Heart left ventricle (tissue), 16 donors: ENCODE measurements at regions of chr1 and their contacts with region 1.

Region 1: DNA sequence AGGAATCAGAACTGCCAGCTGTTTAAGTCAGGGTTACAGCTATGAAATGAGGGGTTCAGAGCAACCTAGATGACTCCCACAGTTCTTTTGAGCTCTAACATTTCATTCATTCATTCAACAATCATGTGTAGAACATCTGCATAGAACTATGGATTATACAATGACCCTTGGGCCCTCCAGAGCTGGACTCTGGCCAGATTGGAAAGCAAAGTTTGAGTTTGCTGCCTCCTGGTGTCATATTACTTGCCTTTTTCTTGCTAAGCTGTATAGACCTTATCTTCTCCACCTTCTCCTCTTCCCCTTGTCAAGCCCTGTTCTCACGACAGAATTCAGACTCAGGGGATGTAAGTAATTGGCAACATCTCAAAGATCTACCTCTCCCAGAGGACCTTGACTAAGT is 4.0 kb downstream of the CASQ2 start:
- DNase-seq: peak in 1 of 5 donors; percentile 32
- ATAC-seq: no peak
- H3K4me3 ChIP-seq: peak overlapping the region in 7 of 12 donors; percentile 60 to 86 (median 64)
- H3K27ac ChIP-seq: peak overlapping the region in 6 of 12 donors; percentile 41 to 100 (median 92)
- H3K4me1 ChIP-seq: peaks cover 0 to 56% (median 10%) of the 10 kb centered on the region in 12 donors
- H3K27me3 ChIP-seq: no peaks in the 10 kb centered on the region
- CTCF ChIP-seq: peak in 10 of 12 donors; percentile 32 to 65 (median 45)
- POLR2A ChIP-seq: no peak

Region 2: GRCh38 chr1:115717541-115717940 is 47.0 kb before region 1 on chr1:
- intact Hi-C with region 1: loop called in 6 of 10 experiments (anchors 2 to 5 kb)
- DNase-seq: peak in 2 of 5 donors; percentile 27 to 62
- ATAC-seq: peak in 2 of 4 donors; percentile 4 to 21
- H3K4me3 ChIP-seq: no peak overlapping the region
- H3K27ac ChIP-seq: no peak overlapping the region
- H3K4me1 ChIP-seq: peaks cover 0 to 4% (median 0%) of the 10 kb centered on the region in 12 donors
- H3K27me3 ChIP-seq: no peaks in the 10 kb centered on the region
- CTCF ChIP-seq: peak; percentile 31 to 65 (median 52)
- POLR2A ChIP-seq: no peak

Region 3: DNA sequence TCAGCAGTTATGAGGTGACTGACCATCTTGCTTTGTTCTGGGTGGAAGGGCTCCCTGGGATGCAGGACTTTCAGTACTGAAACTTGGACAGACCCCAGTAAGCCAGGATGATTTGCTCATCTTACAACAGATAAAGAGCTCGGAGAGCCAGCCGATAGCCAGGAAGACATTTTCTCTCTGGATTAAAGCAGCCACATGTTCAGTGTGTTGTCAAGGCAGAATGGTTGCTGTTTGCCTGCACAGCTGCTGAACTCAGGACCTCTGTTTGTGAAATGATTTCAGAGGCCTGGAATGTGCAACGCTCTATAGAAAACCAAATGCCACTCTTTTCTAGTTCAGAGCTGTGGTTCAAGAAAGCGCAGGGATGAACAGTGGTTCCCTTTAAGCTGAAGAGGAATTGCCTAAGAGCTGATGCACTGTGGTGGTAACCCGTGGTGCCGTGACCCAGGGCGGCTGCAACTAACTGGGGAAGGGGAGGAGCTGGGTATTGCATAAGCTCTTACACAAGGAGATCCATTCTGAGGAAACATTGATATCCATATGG is 36.8 kb before region 1 on chr1:
- intact Hi-C with region 1: loop called in 3 of 10 experiments (anchors 2 to 5 kb)
- DNase-seq: peak; percentile 52 to 77 (median 65)
- ATAC-seq: peak; percentile 79 to 90 (median 82)
- H3K4me3 ChIP-seq: no peak overlapping the region
- H3K27ac ChIP-seq: peak overlapping the region; percentile 52 to 88 (median 74)
- H3K4me1 ChIP-seq: peaks cover 0 to 54% (median 29%) of the 10 kb centered on the region in 12 donors
- H3K27me3 ChIP-seq: no peaks in the 10 kb centered on the region
- CTCF ChIP-seq: no peak
- POLR2A ChIP-seq: no peak

Region 4: GRCh38 chr1:116273042-116273783 is 508.7 kb after region 1 on chr1:
- intact Hi-C with region 1: no loop called
- DNase-seq: peak in 4 of 5 donors; percentile 49 to 80 (median 62)
- ATAC-seq: peak; percentile 91 to 98 (median 96)
- H3K4me3 ChIP-seq: no peak overlapping the region
- H3K27ac ChIP-seq: peak overlapping the region in 4 of 12 donors; percentile 1 to 56 (median 30)
- H3K4me1 ChIP-seq: peaks cover 0 to 7% (median 0%) of the 10 kb centered on the region in 12 donors
- H3K27me3 ChIP-seq: no peaks in the 10 kb centered on the region
- CTCF ChIP-seq: no peak
- POLR2A ChIP-seq: no peak

Region 5: GRCh38 chr1:116763787-116764465 is 999.4 kb after region 1 on chr1:
- intact Hi-C with region 1: no loop called
- DNase-seq: no peak
- ATAC-seq: peak in 1 of 4 donors; percentile 64
- H3K4me3 ChIP-seq: peak overlapping the region in 1 of 12 donors; percentile 1
- H3K27ac ChIP-seq: peak overlapping the region in 1 of 12 donors; percentile 71
- H3K4me1 ChIP-seq: peaks cover 0 to 44% (median 0%) of the 10 kb centered on the region in 12 donors
- H3K27me3 ChIP-seq: no peaks in the 10 kb centered on the region
- CTCF ChIP-seq: peak in 11 of 12 donors; percentile 17 to 50 (median 36)
- POLR2A ChIP-seq: no peak